ENCODE measurements at regions of chr9 and their contacts with region 1.

Region 1: DNA sequence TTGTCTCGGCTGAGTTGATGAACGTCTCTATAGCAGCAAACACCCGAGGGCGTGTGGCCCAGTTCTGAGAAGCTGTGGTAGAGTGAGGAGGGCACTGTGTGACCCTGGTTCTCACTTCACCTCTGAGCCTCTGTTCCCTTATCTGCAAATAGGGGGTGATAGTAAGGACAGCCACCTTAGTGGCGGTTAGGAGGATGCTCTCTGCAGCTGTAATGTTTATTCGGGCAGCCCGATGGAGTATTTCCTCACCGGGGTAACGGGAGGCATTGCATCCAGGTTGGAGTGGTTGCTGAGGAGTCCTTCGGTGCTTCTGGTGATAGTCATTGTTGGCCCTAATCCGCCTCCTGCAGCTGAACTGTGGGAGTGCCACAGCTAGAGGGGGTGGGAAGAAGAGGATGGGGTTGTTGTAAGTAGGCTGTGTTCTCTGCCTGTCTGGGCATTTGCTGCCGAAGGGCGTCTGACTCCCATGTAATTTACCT is 13.9 kb downstream of the PRRC2B start:
- DNase-seq: peak; percentile 69
- ATAC-seq: peak; percentile 74
- H3K4me3 Mint-ChIP-seq: peak overlapping the region; percentile 76
- H3K27ac Mint-ChIP-seq: peak overlapping the region; percentile 76
- H3K4me1 Mint-ChIP-seq: peaks cover 85% of the 10 kb centered on the region
- H3K27me3 Mint-ChIP-seq: no peaks in the 10 kb centered on the region

Region 2: GRCh38 chr9:131366761-131367401 is 40.9 kb before region 1 on chr9:
- CTCF ChIA-PET with region 1: interaction called, 14 read pairs
- POLR2A ChIA-PET with region 1: no interaction called
- DNase-seq: no peak
- ATAC-seq: no peak
- H3K4me3 Mint-ChIP-seq: no peak overlapping the region
- H3K27ac Mint-ChIP-seq: no peak overlapping the region
- H3K4me1 Mint-ChIP-seq: peaks cover 1% of the 10 kb centered on the region
- H3K27me3 Mint-ChIP-seq: no peaks in the 10 kb centered on the region

Region 3: GRCh38 chr9:131395157-131396098 is 12.3 kb before region 1 on chr9:
- CTCF ChIA-PET with region 1: interaction called, 33 read pairs
- POLR2A ChIA-PET with region 1: interaction called, 21 read pairs
- DNase-seq: peak; percentile 87
- ATAC-seq: peak; percentile 67
- H3K4me3 Mint-ChIP-seq: peak overlapping the region; percentile 97
- H3K27ac Mint-ChIP-seq: peak overlapping the region; percentile 84
- H3K4me1 Mint-ChIP-seq: peaks cover 66% of the 10 kb centered on the region
- H3K27me3 Mint-ChIP-seq: peaks cover 5% of the 10 kb centered on the region

Region 4: GRCh38 chr9:131578021-131578649 is 170.4 kb after region 1 on chr9:
- CTCF ChIA-PET with region 1: no interaction called
- POLR2A ChIA-PET with region 1: no interaction called
- DNase-seq: no peak
- ATAC-seq: peak; percentile 7
- H3K4me3 Mint-ChIP-seq: peak overlapping the region; percentile 57
- H3K27ac Mint-ChIP-seq: peak overlapping the region; percentile 95
- H3K4me1 Mint-ChIP-seq: peaks cover 34% of the 10 kb centered on the region
- H3K27me3 Mint-ChIP-seq: no peaks in the 10 kb centered on the region

Measured in activated CD8-positive, alpha-beta T cell treated with anti-CD3 and anti-CD28 coated beads, Interleukin-2, amount 10 ng/mL, durations not matched to agents 7 days and 5 days (primary cell).